GM10248 (cell line): ENCODE measurements at regions of chr19 and their contacts with region 1.

Region 1: GRCh38 chr19:34096020-34096915 is 76.0 kb upstream of the LSM14A start:
- DNase-seq: peak; percentile 33
- CTCF ChIP-seq: peak; percentile 65

Region 2: GRCh38 chr19:34041925-34042521 is 54.2 kb before region 1 on chr19:
- CTCF ChIA-PET with region 1: interaction called, 11 read pairs
- POLR2A ChIA-PET with region 1: no interaction called
- DNase-seq: peak; percentile 62
- CTCF ChIP-seq: peak; percentile 78